ENCODE measurements at regions of chr5 and their contacts with region 1.

Region 1: DNA sequence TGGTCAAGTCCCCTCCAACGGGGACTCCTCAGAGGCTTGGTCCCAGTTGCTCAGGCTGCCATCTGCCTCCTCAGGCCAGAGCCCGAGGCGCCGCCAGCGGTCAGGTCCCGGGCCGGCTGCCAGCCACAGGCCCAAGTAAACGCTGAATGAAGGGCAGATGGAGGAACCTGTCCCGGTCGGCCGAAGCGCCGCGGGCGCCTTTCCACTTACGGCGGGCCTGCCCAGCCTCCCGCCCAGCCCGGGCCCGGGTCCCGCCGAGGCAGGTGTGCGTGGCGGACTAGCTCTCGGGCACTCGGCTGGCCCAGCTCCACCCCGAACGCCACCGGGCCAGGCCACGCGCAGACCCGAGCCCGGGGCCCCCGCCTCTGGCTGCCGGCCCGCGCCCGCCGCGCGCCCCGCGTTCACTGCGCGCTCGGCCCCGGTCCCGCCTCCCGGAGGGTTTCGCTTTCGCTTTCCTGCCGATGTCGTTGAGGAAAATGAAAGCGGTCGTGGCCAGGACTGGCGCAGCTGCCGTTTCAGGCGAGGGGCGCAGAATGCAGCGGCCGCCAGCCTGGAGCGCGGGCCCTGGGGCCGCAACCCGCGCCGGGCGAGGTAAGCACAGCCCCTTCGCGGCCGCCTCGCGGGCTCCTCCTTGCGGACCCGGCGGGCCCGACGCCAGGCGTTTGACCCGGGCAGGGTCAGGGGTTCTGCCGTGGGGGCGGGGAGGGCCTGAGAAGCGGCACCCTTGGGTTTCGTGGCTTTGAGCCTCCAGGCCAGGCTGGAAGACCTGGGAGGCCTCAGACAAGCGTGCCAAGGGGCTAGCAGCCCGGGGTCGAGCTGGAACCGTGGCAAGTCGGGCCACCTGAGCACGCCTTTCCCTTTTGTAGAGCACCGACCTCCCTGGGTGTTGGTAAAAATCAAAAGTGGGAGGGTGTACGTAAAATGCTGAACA is 41.2 kb downstream of the SLC22A5 start:
- DNase-seq: peak; percentile 92
- ATAC-seq: peak; percentile 86
- H3K4me3 Mint-ChIP-seq: peak overlapping the region; percentile 91
- H3K27ac Mint-ChIP-seq: peak overlapping the region; percentile 99
- H3K4me1 Mint-ChIP-seq: peaks cover 58% of the 10 kb centered on the region
- H3K27me3 Mint-ChIP-seq: no peaks in the 10 kb centered on the region

Region 2: DNA sequence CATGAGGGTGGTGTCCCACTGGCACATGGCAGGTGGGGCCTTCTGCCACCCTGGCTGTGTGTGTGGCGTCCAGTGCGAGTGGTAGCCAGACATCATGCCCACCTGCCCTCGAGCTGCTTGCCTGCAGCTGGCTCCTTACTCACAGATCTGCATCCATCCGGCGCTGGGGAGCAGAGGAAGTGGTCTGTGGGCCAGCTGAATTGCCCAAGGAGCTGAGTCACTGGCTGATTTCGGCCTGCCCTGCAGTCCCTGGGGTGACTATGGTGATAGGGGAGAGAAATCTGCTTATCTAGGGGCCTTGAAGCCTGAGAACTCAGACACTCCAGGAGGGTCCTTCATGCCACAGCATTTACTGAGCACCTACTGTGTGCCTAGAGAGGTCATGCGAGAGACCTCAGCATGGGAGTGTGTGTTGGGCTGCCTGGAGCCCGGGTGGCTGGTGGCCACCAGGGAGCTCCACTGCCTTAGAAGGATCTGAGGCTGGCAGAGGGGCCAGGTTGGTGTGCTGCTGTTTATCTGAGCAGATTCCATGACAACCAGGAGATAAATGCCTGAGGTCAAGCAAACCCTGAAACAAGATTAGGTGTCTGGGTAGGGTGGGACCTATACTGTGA is 15.9 kb after region 1 on chr5:
- CTCF ChIA-PET with region 1: interaction called, 16 read pairs
- POLR2A ChIA-PET with region 1: interaction called, 82 read pairs
- DNase-seq: peak; percentile 85
- ATAC-seq: peak; percentile 59
- H3K4me3 Mint-ChIP-seq: peak overlapping the region; percentile 74
- H3K27ac Mint-ChIP-seq: peak overlapping the region; percentile 98
- H3K4me1 Mint-ChIP-seq: peaks cover 99% of the 10 kb centered on the region
- H3K27me3 Mint-ChIP-seq: no peaks in the 10 kb centered on the region

Region 3: DNA sequence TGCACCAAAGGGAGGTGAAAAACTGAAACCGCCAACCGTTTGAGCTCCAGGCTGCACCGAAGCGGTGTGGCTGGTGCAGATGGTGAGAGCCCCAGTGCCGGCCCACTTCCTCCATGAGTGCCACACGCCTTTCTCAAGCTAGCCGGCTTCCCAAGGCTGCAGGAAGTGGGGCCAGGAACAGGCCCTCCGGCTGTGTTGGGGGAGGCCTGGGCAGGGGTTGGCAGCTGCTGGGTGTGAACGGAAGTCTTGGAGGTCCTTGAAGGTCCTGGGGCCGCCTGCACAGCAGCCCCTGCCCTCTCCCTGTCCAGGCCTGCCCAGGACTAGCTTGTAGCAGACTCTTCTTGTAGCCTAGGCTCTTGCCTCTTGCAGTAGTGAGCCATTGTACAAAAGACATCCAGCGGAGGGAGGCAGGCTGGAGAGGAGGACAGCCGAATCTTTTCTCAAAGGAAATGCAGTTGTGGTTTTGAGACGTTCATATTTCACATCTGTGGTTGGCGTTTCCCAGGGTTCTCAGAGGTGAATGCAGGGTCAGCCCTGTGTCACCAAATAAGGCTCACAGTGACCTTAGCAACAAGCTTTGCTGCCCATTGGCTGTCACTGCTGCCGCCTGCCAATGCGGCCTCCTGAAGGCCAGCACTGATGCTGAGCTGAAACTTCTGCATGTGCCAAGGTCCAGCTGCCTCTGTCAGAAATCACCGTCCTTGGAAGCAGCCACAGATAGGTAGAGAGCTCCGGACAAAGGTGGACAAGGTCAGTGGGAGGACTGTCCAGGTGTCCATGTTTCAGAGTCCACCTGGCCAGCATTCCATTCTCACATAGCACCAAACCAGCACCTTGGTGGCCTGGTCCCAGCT is 55.9 kb after region 1 on chr5:
- CTCF ChIA-PET with region 1: interaction called, 11 read pairs
- POLR2A ChIA-PET with region 1: interaction called, 49 read pairs
- DNase-seq: peak; percentile 90
- ATAC-seq: peak; percentile 82
- H3K4me3 Mint-ChIP-seq: peak overlapping the region; percentile 60
- H3K27ac Mint-ChIP-seq: peak overlapping the region; percentile 92
- H3K4me1 Mint-ChIP-seq: peaks cover 100% of the 10 kb centered on the region
- H3K27me3 Mint-ChIP-seq: no peaks in the 10 kb centered on the region

Region 4: DNA sequence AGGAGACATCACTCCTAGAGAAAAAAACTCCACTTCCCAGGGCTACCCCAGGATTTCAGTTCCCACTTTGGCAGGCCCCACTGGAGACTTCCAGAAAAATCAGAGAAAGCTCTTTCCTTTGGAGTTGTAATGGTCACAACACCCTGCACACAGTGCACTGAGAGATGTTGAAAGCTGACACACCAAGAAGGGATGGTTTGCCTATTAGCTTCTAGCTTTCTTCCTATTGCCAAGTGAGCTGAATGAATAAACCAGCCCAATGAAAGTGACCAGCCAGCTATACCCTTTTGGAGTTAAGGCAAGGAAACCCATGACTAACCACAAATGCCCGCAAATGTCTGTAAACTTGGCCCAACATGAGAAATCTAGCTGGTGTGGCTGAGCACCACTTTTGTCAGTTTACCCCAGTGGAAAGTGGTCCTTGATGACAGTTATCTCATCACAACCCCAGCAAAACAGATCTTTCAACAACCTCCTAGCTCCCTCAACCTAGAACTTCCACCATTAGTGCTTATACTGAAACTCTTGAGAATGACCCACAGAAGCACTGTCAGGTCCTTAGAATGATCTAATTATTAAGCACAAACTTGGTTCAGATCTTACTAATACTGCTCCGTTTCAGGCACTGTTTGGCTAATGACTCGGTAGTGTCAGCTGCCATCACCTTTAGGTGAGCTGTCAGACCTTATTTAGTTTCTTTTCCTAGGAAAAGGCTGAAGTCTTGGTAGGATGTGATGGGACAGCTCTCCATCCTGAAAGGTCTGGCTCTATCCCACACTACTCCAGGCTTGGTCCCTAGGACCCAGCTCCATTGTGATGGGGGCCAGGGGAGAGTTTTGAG is 68.6 kb after region 1 on chr5:
- CTCF ChIA-PET with region 1: interaction called, 18 read pairs
- POLR2A ChIA-PET with region 1: interaction called, 249 read pairs
- DNase-seq: no peak
- ATAC-seq: no peak
- H3K4me3 Mint-ChIP-seq: no peak overlapping the region
- H3K27ac Mint-ChIP-seq: peak overlapping the region; percentile 80
- H3K4me1 Mint-ChIP-seq: peaks cover 83% of the 10 kb centered on the region
- H3K27me3 Mint-ChIP-seq: no peaks in the 10 kb centered on the region

Region 5: GRCh38 chr5:132495667-132496190 is 85.0 kb after region 1 on chr5:
- CTCF ChIA-PET with region 1: interaction called, 75 read pairs
- POLR2A ChIA-PET with region 1: interaction called, 249 read pairs
- DNase-seq: peak; percentile 87
- ATAC-seq: peak; percentile 59
- H3K4me3 Mint-ChIP-seq: peak overlapping the region; percentile 83
- H3K27ac Mint-ChIP-seq: peak overlapping the region; percentile 95
- H3K4me1 Mint-ChIP-seq: peaks cover 77% of the 10 kb centered on the region
- H3K27me3 Mint-ChIP-seq: no peaks in the 10 kb centered on the region

Region 6: GRCh38 chr5:132506094-132506692 is 95.5 kb after region 1 on chr5:
- CTCF ChIA-PET with region 1: interaction called, 75 read pairs
- POLR2A ChIA-PET with region 1: interaction called, 4 read pairs
- DNase-seq: peak; percentile 51
- ATAC-seq: peak; percentile 68
- H3K4me3 Mint-ChIP-seq: no peak overlapping the region
- H3K27ac Mint-ChIP-seq: no peak overlapping the region
- H3K4me1 Mint-ChIP-seq: peaks cover 14% of the 10 kb centered on the region
- H3K27me3 Mint-ChIP-seq: peaks cover 13% of the 10 kb centered on the region

Measured in activated CD8-positive, alpha-beta T cell treated with anti-CD3 and anti-CD28 coated beads, Interleukin-2, amount 10 ng/mL, durations not matched to agents 7 days and 5 days (primary cell).